ENCODE measurements at regions of chr2 and their contacts with region 1.

Region 1: GRCh38 chr2:232772531-232772930 is 3.8 kb downstream of the KCNJ13 start:
- DNase-seq: peak; percentile 48
- ATAC-seq: peak; percentile 90
- H3K4me3 ChIP-seq: no peak overlapping the region
- H3K27ac ChIP-seq: peak overlapping the region; percentile 40; the same call in 1 of the 2 replicates
- H3K4me1 ChIP-seq: peaks cover 12% of the 10 kb centered on the region
- H3K27me3 ChIP-seq: no peaks in the 10 kb centered on the region
- CTCF ChIP-seq: no peak
- EP300 ChIP-seq: no peak
- POLR2A ChIP-seq: no peak
- RAD21 ChIP-seq: no peak

Region 2: GRCh38 chr2:232744963-232745362 is 27.6 kb before region 1 on chr2:
- CTCF ChIA-PET with region 1: no interaction called
- POLR2A ChIA-PET with region 1: no interaction called
- RAD21 ChIA-PET with region 1: no interaction called
- SMC1A ChIA-PET with region 1: no interaction called
- in situ Hi-C with region 1: no loop called
- intact Hi-C with region 1: no loop called
- DNase-seq: no peak
- ATAC-seq: no peak
- H3K4me3 ChIP-seq: no peak overlapping the region
- H3K27ac ChIP-seq: no peak overlapping the region
- H3K4me1 ChIP-seq: peaks cover 4% of the 10 kb centered on the region
- H3K27me3 ChIP-seq: no peaks in the 10 kb centered on the region
- CTCF ChIP-seq: no peak
- EP300 ChIP-seq: no peak
- POLR2A ChIP-seq: no peak
- RAD21 ChIP-seq: no peak

Region 3: GRCh38 chr2:232783278-232783677 is 10.7 kb after region 1 on chr2:
- CTCF ChIA-PET with region 1: interaction called, 16 read pairs
- POLR2A ChIA-PET with region 1: interaction called, 4 read pairs
- RAD21 ChIA-PET with region 1: interaction called, 4 read pairs
- SMC1A ChIA-PET with region 1: interaction called, 24 read pairs
- in situ Hi-C with region 1: no loop called
- intact Hi-C with region 1: no loop called
- DNase-seq: no peak
- ATAC-seq: no peak
- H3K4me3 ChIP-seq: no peak overlapping the region
- H3K27ac ChIP-seq: no peak overlapping the region
- H3K4me1 ChIP-seq: no peaks in the 10 kb centered on the region
- H3K27me3 ChIP-seq: no peaks in the 10 kb centered on the region
- CTCF ChIP-seq: no peak
- EP300 ChIP-seq: no peak
- POLR2A ChIP-seq: no peak
- RAD21 ChIP-seq: no peak